Activated CD4-positive, alpha-beta T cell treated with anti-CD3 and anti-CD28 coated beads for 36 hours (primary cell): ENCODE measurements at regions of chr2 and their contacts with region 1.

Region 1: GRCh38 chr2:42810121-42810970 is 18.0 kb upstream of the HAAO start:
- DNase-seq: peak; percentile 97
- ATAC-seq: peak; percentile 80
- H3K4me3 Mint-ChIP-seq: peak overlapping the region; percentile 94
- H3K27ac Mint-ChIP-seq: peak overlapping the region; percentile 98
- H3K4me1 Mint-ChIP-seq: peaks cover 17% of the 10 kb centered on the region
- H3K27me3 Mint-ChIP-seq: peaks cover 2% of the 10 kb centered on the region

Region 2: GRCh38 chr2:41840702-41841551 is 969.4 kb before region 1 on chr2:
- CTCF ChIA-PET with region 1: no interaction called
- POLR2A ChIA-PET with region 1: no interaction called
- intact Hi-C with region 1: loop called in 1 of 2 experiments (anchors 10 kb)
- DNase-seq: peak; percentile 99
- ATAC-seq: peak; percentile 100
- H3K4me3 Mint-ChIP-seq: peak overlapping the region; percentile 84
- H3K27ac Mint-ChIP-seq: peak overlapping the region; percentile 92
- H3K4me1 Mint-ChIP-seq: peaks cover 10% of the 10 kb centered on the region
- H3K27me3 Mint-ChIP-seq: peaks cover 16% of the 10 kb centered on the region

Region 3: GRCh38 chr2:42360890-42361727 is 449.2 kb before region 1 on chr2 and contains the start of gene COX7A2L:
- CTCF ChIA-PET with region 1: no interaction called
- POLR2A ChIA-PET with region 1: no interaction called
- intact Hi-C with region 1: loop called in 1 of 2 experiments (anchors 1 kb)
- DNase-seq: peak; percentile 98
- ATAC-seq: peak; percentile 94
- H3K4me3 Mint-ChIP-seq: peak within 1 kb of the TSS; percentile 89
- H3K27ac Mint-ChIP-seq: peak within 1 kb of the TSS; percentile 94
- H3K4me1 Mint-ChIP-seq: peaks cover 40% of the 10 kb centered on the region
- H3K27me3 Mint-ChIP-seq: no peaks in the 10 kb centered on the region
- total RNA-seq, gene COX7A2L: 103 TPM

Region 4: GRCh38 chr2:42568401-42569115 is 241.8 kb before region 1 on chr2 and contains the start of gene MTA3:
- CTCF ChIA-PET with region 1: no interaction called
- POLR2A ChIA-PET with region 1: no interaction called
- intact Hi-C with region 1: loop called in 1 of 2 experiments (anchors 1 kb)
- DNase-seq: peak; percentile 81
- ATAC-seq: peak; percentile 81
- H3K4me3 Mint-ChIP-seq: peak within 1 kb of the TSS; percentile 86
- H3K27ac Mint-ChIP-seq: peak within 1 kb of the TSS; percentile 91
- H3K4me1 Mint-ChIP-seq: peaks cover 32% of the 10 kb centered on the region
- H3K27me3 Mint-ChIP-seq: no peaks in the 10 kb centered on the region
- total RNA-seq, gene MTA3: 45.0 to 58.6 TPM

Region 5: DNA sequence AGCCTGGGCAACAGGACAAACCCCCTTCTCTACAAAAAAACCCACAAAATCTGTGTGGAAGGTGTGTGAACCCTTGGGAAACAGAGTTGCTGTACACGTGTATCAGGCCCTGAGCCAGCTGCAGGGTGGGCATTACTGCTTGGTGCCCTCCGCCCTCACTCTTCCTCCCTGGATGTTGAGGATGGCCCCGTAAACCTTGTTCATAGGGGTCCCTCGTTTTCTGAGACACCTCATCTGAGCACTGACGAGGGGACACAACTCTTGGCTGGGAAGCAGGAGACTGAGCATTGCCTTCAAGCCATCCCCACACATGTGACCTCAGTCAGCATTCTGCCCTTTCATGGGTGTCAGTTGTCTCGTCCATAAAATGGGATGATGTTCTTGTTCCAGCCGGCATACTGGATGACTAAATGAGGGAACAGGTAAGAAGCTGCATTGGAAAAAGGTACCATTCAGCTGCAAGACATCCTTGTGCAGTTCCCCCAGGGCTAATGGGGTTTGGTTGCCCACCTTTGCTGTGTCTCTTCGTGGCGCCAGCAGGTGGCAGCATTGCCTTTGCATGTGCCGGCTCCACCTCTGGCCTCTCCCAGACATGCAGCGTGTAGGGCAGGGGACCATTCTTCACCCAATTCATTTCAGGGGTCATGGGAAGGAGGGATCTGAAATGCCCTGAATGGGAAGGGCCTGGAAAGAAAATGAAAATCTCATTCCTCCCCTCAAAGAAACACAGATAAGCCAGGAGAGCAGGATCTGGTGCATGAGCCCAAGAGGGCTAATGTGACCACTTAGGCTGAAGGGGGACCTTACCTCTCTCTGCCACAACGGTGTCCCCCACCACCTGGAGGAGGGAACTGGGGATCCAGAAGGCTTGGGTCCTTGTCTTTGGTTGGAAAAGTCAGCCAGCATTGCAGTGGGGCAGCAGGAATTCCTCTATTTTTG is 18.4 kb after region 1 on chr2:
- CTCF ChIA-PET with region 1: interaction called, 16 read pairs
- POLR2A ChIA-PET with region 1: no interaction called
- intact Hi-C with region 1: loop called in 1 of 2 experiments (anchors 2 kb)
- DNase-seq: peak; percentile 84
- ATAC-seq: peak; percentile 92
- H3K4me3 Mint-ChIP-seq: no peak overlapping the region
- H3K27ac Mint-ChIP-seq: no peak overlapping the region
- H3K4me1 Mint-ChIP-seq: peaks cover 10% of the 10 kb centered on the region
- H3K27me3 Mint-ChIP-seq: no peaks in the 10 kb centered on the region

Region 6: DNA sequence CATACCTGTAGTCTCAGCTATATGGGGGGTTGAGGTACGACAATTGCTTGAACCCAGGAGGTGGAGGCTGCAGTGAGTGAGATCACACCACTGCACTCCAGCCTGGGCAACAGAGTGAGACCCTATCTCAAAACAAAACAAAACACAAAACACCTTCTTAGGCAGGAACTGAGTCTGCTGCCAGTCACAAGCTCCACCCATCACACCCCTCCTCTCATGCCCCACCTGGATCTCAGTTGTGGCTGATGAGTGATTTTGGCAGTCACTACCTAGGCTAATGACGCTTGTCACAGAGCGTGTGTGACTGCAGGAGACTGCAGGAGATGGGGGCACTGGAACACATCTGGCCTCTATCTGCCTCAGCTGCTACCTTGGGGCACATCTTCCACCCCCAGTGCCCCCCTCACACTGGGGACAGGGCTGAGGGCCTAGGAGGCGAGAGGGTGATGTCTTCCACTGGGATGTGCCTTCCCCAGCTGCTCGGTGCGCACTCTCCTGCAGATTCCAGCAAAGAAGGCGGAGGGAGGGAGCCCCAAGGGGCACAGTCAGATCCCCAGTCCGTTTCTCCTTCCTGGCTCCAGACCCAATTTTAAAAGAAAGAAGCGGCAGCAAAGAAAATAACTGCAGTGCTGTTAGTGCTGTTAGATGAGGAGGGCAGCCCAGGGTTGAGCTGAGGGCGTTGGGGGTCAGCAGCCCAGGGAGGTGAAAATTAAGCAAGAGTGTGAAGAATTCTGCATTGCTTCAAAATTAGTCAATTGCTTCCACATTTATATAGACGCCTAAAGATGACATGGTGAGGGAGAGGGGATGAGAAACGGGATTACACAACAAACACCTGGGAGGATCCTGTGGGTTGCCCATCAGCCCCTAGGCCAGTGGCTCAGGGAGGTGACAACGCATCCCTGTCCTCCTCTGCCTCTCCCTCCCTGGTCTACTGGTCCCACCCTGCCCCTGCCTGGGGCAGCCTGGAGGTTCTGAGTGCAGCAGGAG is 125.6 kb after region 1 on chr2:
- CTCF ChIA-PET with region 1: no interaction called
- POLR2A ChIA-PET with region 1: no interaction called
- intact Hi-C with region 1: no loop called
- DNase-seq: peak; percentile 52
- ATAC-seq: peak; percentile 95
- H3K4me3 Mint-ChIP-seq: no peak overlapping the region
- H3K27ac Mint-ChIP-seq: no peak overlapping the region
- H3K4me1 Mint-ChIP-seq: peaks cover 3% of the 10 kb centered on the region
- H3K27me3 Mint-ChIP-seq: no peaks in the 10 kb centered on the region

Region 7: GRCh38 chr2:43595603-43596412 is 785.5 kb after region 1 on chr2 and contains the start of gene THADA:
- CTCF ChIA-PET with region 1: no interaction called
- POLR2A ChIA-PET with region 1: no interaction called
- intact Hi-C with region 1: loop called (anchors 1 kb)
- DNase-seq: peak; percentile 99
- ATAC-seq: peak; percentile 97
- H3K4me3 Mint-ChIP-seq: peak within 1 kb of the TSS; percentile 89
- H3K27ac Mint-ChIP-seq: peak within 1 kb of the TSS; percentile 98
- H3K4me1 Mint-ChIP-seq: peaks cover 34% of the 10 kb centered on the region
- H3K27me3 Mint-ChIP-seq: peaks cover 2% of the 10 kb centered on the region
- total RNA-seq, gene THADA: 32.5 to 36.6 TPM